ENCODE measurements at regions of chr4 and their contacts with region 1.

Region 1: GRCh38 chr4:15451866-15452765 is 17.6 kb upstream of the CC2D2A start:
- DNase-seq: peak; percentile 79
- H3K4me3 ChIP-seq: no peak overlapping the region
- H3K27ac ChIP-seq: peak overlapping the region; percentile 45 to 71 (median 60)
- H3K4me1 ChIP-seq: peaks cover 35 to 51% (median 43%) of the 10 kb centered on the region in 4 donors
- H3K27me3 ChIP-seq: no peaks in the 10 kb centered on the region
- CTCF ChIP-seq: no peak
- EP300 ChIP-seq: no peak
- POLR2A ChIP-seq: no peak

Region 2: GRCh38 chr4:15396157-15396800 is 55.8 kb before region 1 on chr4:
- intact Hi-C with region 1: loop called (anchors 5 kb)
- DNase-seq: no peak
- H3K4me3 ChIP-seq: no peak overlapping the region
- H3K27ac ChIP-seq: no peak overlapping the region
- H3K4me1 ChIP-seq: peaks cover 12 to 71% (median 44%) of the 10 kb centered on the region in 4 donors
- H3K27me3 ChIP-seq: no peaks in the 10 kb centered on the region
- CTCF ChIP-seq: peak; percentile 49 to 74 (median 50)
- EP300 ChIP-seq: no peak
- POLR2A ChIP-seq: no peak

Region 3: DNA sequence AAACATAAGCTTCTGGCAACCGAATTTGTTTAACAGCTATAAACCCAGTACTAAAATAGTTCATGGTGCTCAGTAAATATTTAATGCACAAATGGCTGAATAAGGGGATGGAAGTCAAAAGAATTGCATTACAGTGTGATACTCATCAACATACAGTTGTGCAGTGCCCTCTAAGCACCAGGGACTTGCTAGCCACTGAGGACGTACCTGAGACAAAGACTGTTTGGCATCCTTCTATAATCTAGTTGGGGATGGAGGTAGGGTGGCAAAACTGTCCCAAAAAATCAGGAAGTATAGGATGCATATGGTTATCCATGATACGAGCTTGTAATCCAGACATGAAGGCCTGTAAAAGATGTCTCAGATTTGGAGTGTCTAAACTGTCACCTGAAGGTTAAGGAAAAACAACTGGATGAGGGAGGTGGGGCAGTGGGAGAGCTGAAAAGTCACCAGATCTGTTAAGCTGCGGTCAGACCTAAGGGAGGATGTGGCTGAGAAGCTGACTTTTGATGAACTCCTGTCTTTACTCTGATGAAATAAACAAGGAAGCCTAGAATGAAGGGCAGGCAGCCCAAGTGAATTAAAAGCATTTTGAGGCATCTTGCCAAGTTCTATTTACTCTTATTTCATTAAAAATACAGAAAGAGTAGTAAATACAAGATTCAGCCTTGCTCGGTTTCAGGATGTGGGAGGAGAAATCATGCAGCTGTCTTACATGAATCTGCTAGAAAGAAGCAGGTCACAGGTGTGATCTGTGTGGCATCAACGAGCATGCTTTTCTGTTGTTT is 314.0 kb after region 1 on chr4:
- intact Hi-C with region 1: no loop called
- DNase-seq: no peak
- H3K4me3 ChIP-seq: no peak overlapping the region
- H3K27ac ChIP-seq: no peak overlapping the region
- H3K4me1 ChIP-seq: no peaks in the 10 kb centered on the region
- H3K27me3 ChIP-seq: no peaks in the 10 kb centered on the region
- CTCF ChIP-seq: no peak
- EP300 ChIP-seq: no peak
- POLR2A ChIP-seq: no peak

Measured in esophagus muscularis mucosa (tissue), 4 donors.